Caco-2 (cell line): ENCODE measurements at regions of chr10 and their contacts with region 1.

Region 1: DNA sequence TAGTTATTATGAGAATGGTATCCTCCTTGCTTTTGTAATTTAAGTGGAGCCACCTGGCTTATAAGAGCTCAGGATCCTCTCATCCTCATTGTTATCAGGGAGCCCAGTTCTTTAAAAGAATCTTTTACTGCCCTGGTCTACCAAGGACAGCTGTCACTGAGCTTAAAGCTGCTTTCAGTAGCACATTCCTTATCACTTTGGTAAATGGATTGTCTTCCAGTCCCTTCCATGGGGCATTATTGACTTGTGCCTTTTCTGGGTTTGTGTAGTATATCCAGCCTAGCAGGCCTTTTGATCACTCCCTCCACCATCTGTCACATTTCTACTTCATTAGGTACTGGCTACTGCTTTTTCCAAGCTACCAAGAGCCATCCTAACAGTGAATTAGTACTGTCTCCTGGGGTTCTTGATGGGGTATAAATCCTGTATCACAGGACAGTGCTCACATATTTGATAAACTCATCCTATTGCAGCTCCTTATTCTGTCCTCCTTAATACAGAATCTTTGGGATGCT is 208.9 kb downstream of the TMEM26 start:
- DNase-seq: no peak
- H3K4me3 ChIP-seq: no peak overlapping the region
- H3K4me3 Mint-ChIP-seq: no peak overlapping the region
- H3K27ac Mint-ChIP-seq: no peak overlapping the region
- H3K4me1 ChIP-seq: no peaks in the 10 kb centered on the region
- H3K4me1 Mint-ChIP-seq: no peaks in the 10 kb centered on the region
- H3K27me3 ChIP-seq: 0 out of 2 replicates have a peak, but pooled peaks cover 1% of the 10 kb centered on the region
- H3K27me3 Mint-ChIP-seq: peaks cover 10% of the 10 kb centered on the region
- CTCF ChIP-seq: no peak

Region 2: DNA sequence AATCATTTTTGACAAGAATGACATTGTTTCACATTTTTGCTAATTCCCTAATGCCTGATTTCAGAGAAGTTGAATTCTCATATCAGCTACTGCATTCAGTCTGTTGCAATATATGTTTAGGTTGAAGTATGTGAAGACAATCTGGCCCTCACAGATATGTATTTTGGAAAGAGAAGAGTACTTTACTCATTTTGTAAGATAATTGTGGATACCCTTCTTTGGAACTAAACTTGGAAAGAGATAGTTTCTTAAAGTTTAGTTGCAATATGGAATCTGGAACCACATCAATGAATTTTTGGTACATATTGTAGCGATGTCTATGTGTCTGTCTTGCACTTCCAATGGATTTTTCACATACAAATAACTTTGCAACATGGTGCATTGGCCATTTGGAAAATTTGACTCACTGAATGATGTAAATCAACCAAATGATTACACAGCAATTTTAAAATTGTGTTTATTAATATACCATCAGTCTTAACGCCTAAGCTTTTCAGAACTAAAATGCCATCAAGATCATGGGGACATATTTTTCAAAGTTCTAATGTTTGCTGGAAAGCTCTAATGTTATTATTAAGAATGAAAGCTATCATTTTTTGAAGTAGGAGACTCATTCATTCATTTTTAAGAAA is 248.2 kb after region 1 on chr10:
- CTCF ChIA-PET with region 1: interaction called, 15 read pairs
- POLR2A ChIA-PET with region 1: no interaction called
- intact Hi-C with region 1: no loop called
- DNase-seq: no peak
- H3K4me3 ChIP-seq: no peak overlapping the region
- H3K4me3 Mint-ChIP-seq: no peak overlapping the region
- H3K27ac Mint-ChIP-seq: no peak overlapping the region
- H3K4me1 ChIP-seq: no peaks in the 10 kb centered on the region
- H3K4me1 Mint-ChIP-seq: no peaks in the 10 kb centered on the region
- H3K27me3 ChIP-seq: 0 out of 2 replicates have a peak, but pooled peaks cover 2% of the 10 kb centered on the region
- H3K27me3 Mint-ChIP-seq: peaks cover 30% of the 10 kb centered on the region
- CTCF ChIP-seq: no peak